Naive thymus-derived CD8-positive, alpha-beta T cell (primary cell): ENCODE measurements at regions of chr1 and their contacts with region 1.

Region 1: GRCh38 chr1:165768513-165769394 is at the start of gene TMCO1:
- DNase-seq: peak; percentile 80 to 98 (median 93)
- ATAC-seq: peak; percentile 96 to 97
- H3K4me3 Mint-ChIP-seq: peak within 1 kb of the TSS; percentile 91 to 99 (median 96)
- H3K27ac Mint-ChIP-seq: peak within 1 kb of the TSS; percentile 95 to 99 (median 98)
- H3K4me1 Mint-ChIP-seq: peaks cover 37 to 73% (median 67%) of the 10 kb centered on the region in 4 donors
- H3K27me3 Mint-ChIP-seq: no peaks in the 10 kb centered on the region
- polyA plus RNA-seq, gene TMCO1: 92.3 to 126 (median 97.3) TPM

Region 2: GRCh38 chr1:165630629-165631341 is 138.0 kb before region 1 on chr1 and contains the start of gene MGST3:
- POLR2A ChIA-PET with region 1: interaction called, 12 read pairs
- DNase-seq: peak; percentile 87 to 98 (median 92)
- ATAC-seq: peak; percentile 90 to 92
- H3K4me3 Mint-ChIP-seq: no peak within 1 kb of the TSS
- H3K27ac Mint-ChIP-seq: peak within 1 kb of the TSS in 2 of 10 donors; percentile 82
- H3K4me1 Mint-ChIP-seq: peaks cover 0 to 24% (median 18%) of the 10 kb centered on the region in 4 donors
- H3K27me3 Mint-ChIP-seq: no peaks in the 10 kb centered on the region
- polyA plus RNA-seq, gene MGST3: 95.3 to 160 (median 116) TPM

Region 3: GRCh38 chr1:165697881-165698760 is 70.6 kb before region 1 on chr1 and contains the start of gene ALDH9A1:
- POLR2A ChIA-PET with region 1: interaction called, 32 read pairs
- DNase-seq: peak; percentile 74 to 94 (median 83)
- ATAC-seq: peak; percentile 90 to 92
- H3K4me3 Mint-ChIP-seq: peak within 1 kb of the TSS; percentile 92 to 100 (median 98)
- H3K27ac Mint-ChIP-seq: peak within 1 kb of the TSS; percentile 93 to 99 (median 97)
- H3K4me1 Mint-ChIP-seq: peaks cover 13 to 39% (median 32%) of the 10 kb centered on the region in 4 donors
- H3K27me3 Mint-ChIP-seq: no peaks in the 10 kb centered on the region
- polyA plus RNA-seq, gene ALDH9A1: 67.7 to 90.3 (median 79.4) TPM

Region 4: GRCh38 chr1:165871311-165872067 is 102.7 kb after region 1 on chr1:
- POLR2A ChIA-PET with region 1: interaction called, 10 read pairs
- DNase-seq: peak in 8 of 10 donors; percentile 13 to 61 (median 54)
- ATAC-seq: peak; percentile 84 to 95
- H3K4me3 Mint-ChIP-seq: peak overlapping the region; percentile 43 to 87 (median 74)
- H3K27ac Mint-ChIP-seq: peak overlapping the region in 4 of 10 donors; percentile 36 to 80 (median 59)
- H3K4me1 Mint-ChIP-seq: peaks cover 25 to 56% (median 50%) of the 10 kb centered on the region in 4 donors
- H3K27me3 Mint-ChIP-seq: peaks cover 3 to 24% (median 5%) of the 10 kb centered on the region in 5 donors

Region 5: GRCh38 chr1:165898837-165899236 is 130.1 kb after region 1 on chr1:
- POLR2A ChIA-PET with region 1: no interaction called
- DNase-seq: no peak
- ATAC-seq: no peak
- H3K4me3 Mint-ChIP-seq: no peak overlapping the region
- H3K27ac Mint-ChIP-seq: no peak overlapping the region
- H3K4me1 Mint-ChIP-seq: peaks cover 0 to 5% (median 1%) of the 10 kb centered on the region in 4 donors
- H3K27me3 Mint-ChIP-seq: no peaks in the 10 kb centered on the region